Pancreas (tissue), 10 donors: ENCODE measurements at regions of chr17 and their contacts with region 1.

Region 1: DNA sequence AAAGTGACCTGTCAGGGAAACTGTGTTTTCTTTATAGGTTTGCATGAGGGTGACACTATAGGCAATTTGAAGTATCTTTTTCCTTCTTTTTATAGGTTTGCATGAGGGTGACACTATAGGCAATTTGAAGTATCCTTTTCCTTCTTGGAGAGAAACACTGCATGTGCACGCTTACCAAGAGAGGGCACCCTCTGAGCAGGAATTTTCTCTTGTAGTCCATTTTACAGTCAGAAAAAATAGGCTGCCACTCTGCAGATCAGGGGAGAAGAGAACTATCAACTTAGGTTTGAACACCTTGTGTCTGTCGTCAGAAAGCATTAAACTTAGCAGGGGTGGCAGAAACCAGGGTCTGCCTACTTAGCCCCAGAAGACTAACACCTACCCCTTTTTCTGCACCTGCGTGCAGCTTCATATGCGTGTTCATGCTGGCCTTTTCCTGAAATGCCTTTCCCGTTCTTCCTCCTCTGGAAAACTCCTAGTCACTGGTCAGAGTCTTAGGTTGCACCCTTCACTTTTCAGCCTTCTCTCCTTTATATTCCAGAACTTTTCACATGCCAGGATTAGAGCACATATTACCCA is 16.4 kb upstream of the SMIM36 start:
- DNase-seq: no peak
- ATAC-seq: peak in 3 of 4 donors; percentile 52 to 86 (median 61)
- H3K4me3 ChIP-seq: no peak overlapping the region
- H3K27ac ChIP-seq: no peak overlapping the region
- H3K4me1 ChIP-seq: no peaks in the 10 kb centered on the region
- H3K27me3 ChIP-seq: no peaks in the 10 kb centered on the region
- CTCF ChIP-seq: peak in 1 of 4 donors; percentile 15

Region 2: GRCh38 chr17:54608634-54609155 is 918.9 kb before region 1 on chr17:
- intact Hi-C with region 1: loop called in 1 of 3 experiments (anchors 5 kb)
- DNase-seq: no peak
- ATAC-seq: no peak
- H3K4me3 ChIP-seq: no peak overlapping the region
- H3K27ac ChIP-seq: no peak overlapping the region
- H3K4me1 ChIP-seq: no peaks in the 10 kb centered on the region
- H3K27me3 ChIP-seq: no peaks in the 10 kb centered on the region
- CTCF ChIP-seq: no peak

Region 3: DNA sequence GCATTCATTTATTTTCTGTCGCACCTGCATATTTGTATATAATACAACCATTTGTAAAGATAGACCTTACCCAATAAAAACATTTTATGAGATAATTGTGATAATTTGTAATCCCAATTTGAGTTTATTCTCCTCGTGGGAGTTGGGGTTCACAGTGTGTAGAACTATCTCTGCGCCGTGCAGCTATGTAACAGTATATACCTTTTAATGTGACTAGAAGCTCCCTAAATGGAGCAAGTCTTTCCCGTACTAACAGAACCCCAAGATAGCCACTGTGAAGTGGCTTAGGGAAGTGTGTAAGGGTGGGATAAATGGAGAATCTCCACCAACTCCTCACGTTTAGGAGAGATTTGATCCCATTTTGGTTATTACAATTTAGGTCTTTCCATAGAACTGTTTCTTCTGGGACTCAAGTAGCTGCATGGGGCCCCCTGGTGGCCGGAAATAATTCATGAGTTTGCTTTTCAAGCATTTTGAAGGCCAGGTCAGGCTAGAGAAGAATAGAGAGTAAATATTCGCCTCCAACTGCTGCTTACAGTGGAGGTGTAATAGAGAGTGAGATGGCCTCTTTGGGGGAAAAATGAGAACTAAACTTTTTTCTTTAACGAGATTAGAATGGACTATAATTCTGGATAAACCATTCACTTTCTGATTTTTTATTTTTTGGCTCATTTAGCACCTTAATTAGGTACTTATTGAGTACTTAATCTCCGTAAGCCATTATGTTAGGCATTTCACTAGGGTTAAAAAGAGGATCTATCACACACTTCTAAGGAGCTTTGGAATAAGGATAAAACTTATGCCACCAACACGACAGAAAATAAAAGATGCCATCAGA is 190.5 kb after region 1 on chr17:
- intact Hi-C with region 1: loop called in 1 of 3 experiments (anchors 5 kb)
- DNase-seq: peak in 5 of 6 donors; percentile 42 to 82 (median 64)
- ATAC-seq: peak in 3 of 4 donors; percentile 70 to 83 (median 82)
- H3K4me3 ChIP-seq: no peak overlapping the region
- H3K27ac ChIP-seq: no peak overlapping the region
- H3K4me1 ChIP-seq: no peaks in the 10 kb centered on the region
- H3K27me3 ChIP-seq: no peaks in the 10 kb centered on the region
- CTCF ChIP-seq: peak; percentile 49 to 79 (median 63)

Region 4: GRCh38 chr17:55770148-55770870 is 242.7 kb after region 1 on chr17:
- intact Hi-C with region 1: loop called in 2 of 3 experiments (anchors 5 to 10 kb)
- DNase-seq: no peak
- ATAC-seq: peak; percentile 46 to 77 (median 66)
- H3K4me3 ChIP-seq: no peak overlapping the region
- H3K27ac ChIP-seq: no peak overlapping the region
- H3K4me1 ChIP-seq: no peaks in the 10 kb centered on the region
- H3K27me3 ChIP-seq: no peaks in the 10 kb centered on the region
- CTCF ChIP-seq: peak in 3 of 4 donors; percentile 18 to 36 (median 36)